IMR-90 (cell line): ENCODE measurements at regions of chr1 and their contacts with region 1.

Region 1: DNA sequence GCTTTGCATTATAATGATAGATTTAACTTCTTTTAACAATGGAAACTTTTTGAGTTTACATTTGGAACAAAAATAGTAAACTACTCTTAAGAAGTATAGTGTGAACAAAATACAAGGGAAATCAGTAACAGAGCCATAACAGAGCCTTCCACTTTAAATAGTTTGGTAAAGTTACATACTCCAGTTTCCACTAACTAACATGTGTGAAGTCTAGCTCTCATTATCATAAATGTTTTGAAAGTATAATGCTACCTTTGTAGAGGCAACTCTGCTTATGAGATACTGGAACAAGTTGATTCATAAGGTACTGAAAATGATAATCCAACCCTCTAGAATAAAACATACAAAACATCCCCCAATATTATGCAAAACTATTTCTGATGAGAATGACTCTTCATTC is 1155.1 kb upstream of the ADGRL2 start:
- DNase-seq: no peak
- ATAC-seq: no peak
- H3K4me3 ChIP-seq: no peak overlapping the region
- H3K27ac ChIP-seq: no peak overlapping the region
- H3K4me1 ChIP-seq: no peaks in the 10 kb centered on the region
- H3K27me3 ChIP-seq: no peaks in the 10 kb centered on the region
- CTCF ChIP-seq: no peak
- POLR2A ChIP-seq: no peak
- RAD21 ChIP-seq: no peak

Region 2: DNA sequence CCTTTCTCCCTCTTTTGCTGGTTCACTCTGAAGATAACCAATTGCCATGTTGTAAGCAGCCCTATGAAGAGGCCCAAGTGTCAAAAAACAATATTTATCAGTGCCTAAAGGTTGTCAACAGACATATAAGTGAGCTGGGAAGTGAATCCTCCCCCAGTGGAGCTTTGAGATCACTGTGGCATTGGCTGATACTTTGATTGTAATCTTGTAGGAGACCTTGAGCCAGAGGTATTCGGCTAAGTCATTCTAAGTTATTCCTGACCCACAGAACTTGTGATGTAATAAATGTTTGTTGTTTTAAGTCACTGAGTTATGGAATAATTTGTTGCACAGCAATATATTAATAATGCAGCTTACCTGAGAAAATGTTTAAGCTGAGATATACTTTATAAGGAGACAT is 50.9 kb after region 1 on chr1:
- CTCF ChIA-PET with region 1: no interaction called
- POLR2A ChIA-PET with region 1: no interaction called
- dilution Hi-C with region 1: no loop called
- in situ Hi-C with region 1: no loop called
- intact Hi-C with region 1: loop called (anchors 1 kb)
- DNase-seq: no peak
- ATAC-seq: no peak
- H3K4me3 ChIP-seq: no peak overlapping the region
- H3K27ac ChIP-seq: no peak overlapping the region
- H3K4me1 ChIP-seq: no peaks in the 10 kb centered on the region
- H3K27me3 ChIP-seq: no peaks in the 10 kb centered on the region
- CTCF ChIP-seq: no peak
- POLR2A ChIP-seq: no peak
- RAD21 ChIP-seq: no peak